IMR-90 (cell line): ENCODE measurements at regions of chr4 and their contacts with region 1.

Region 1: GRCh38 chr4:6840062-6840976 is 57.8 kb downstream of the KIAA0232 start:
- DNase-seq: peak; percentile 34
- ATAC-seq: peak; percentile 94
- H3K4me3 ChIP-seq: no peak overlapping the region
- H3K27ac ChIP-seq: no peak overlapping the region
- H3K4me1 ChIP-seq: peaks cover 7% of the 10 kb centered on the region; the same call in 1 of the 2 replicates
- H3K27me3 ChIP-seq: no peaks in the 10 kb centered on the region
- CTCF ChIP-seq: no peak
- POLR2A ChIP-seq: no peak
- RAD21 ChIP-seq: no peak

Region 2: GRCh38 chr4:6322761-6323566 is 517.4 kb before region 1 on chr4:
- CTCF ChIA-PET with region 1: no interaction called
- POLR2A ChIA-PET with region 1: no interaction called
- dilution Hi-C with region 1: no loop called
- in situ Hi-C with region 1: no loop called
- intact Hi-C with region 1: no loop called
- DNase-seq: no peak
- ATAC-seq: no peak
- H3K4me3 ChIP-seq: no peak overlapping the region
- H3K27ac ChIP-seq: no peak overlapping the region
- H3K4me1 ChIP-seq: no peaks in the 10 kb centered on the region
- H3K27me3 ChIP-seq: peaks cover 20% of the 10 kb centered on the region
- CTCF ChIP-seq: no peak
- POLR2A ChIP-seq: no peak
- RAD21 ChIP-seq: no peak

Region 3: GRCh38 chr4:7067452-7068278 is 227.3 kb after region 1 on chr4 and contains the start of gene GRPEL1:
- CTCF ChIA-PET with region 1: no interaction called
- POLR2A ChIA-PET with region 1: no interaction called
- dilution Hi-C with region 1: no loop called
- in situ Hi-C with region 1: no loop called
- intact Hi-C with region 1: no loop called
- DNase-seq: peak; percentile 99
- ATAC-seq: peak; percentile 96
- H3K4me3 ChIP-seq: peak within 1 kb of the TSS; percentile 74
- H3K27ac ChIP-seq: peak within 1 kb of the TSS; percentile 85
- H3K4me1 ChIP-seq: peaks cover 7% of the 10 kb centered on the region; the same call in 1 of the 2 replicates
- H3K27me3 ChIP-seq: peaks cover 2% of the 10 kb centered on the region; the same call in 1 of the 2 replicates
- CTCF ChIP-seq: no peak
- POLR2A ChIP-seq: peak; percentile 95
- RAD21 ChIP-seq: no peak
- total RNA-seq, gene GRPEL1: 33.0 and 48.6 TPM in 2 replicates

Region 4: GRCh38 chr4:7683126-7683703 is 842.9 kb after region 1 on chr4:
- CTCF ChIA-PET with region 1: no interaction called
- POLR2A ChIA-PET with region 1: interaction called, 21 read pairs
- dilution Hi-C with region 1: no loop called
- in situ Hi-C with region 1: no loop called
- intact Hi-C with region 1: no loop called
- DNase-seq: no peak
- ATAC-seq: no peak
- H3K4me3 ChIP-seq: no peak overlapping the region
- H3K27ac ChIP-seq: no peak overlapping the region
- H3K4me1 ChIP-seq: no peaks in the 10 kb centered on the region
- H3K27me3 ChIP-seq: peaks cover 64% of the 10 kb centered on the region
- CTCF ChIP-seq: no peak
- POLR2A ChIP-seq: no peak
- RAD21 ChIP-seq: no peak